ENCODE measurements at regions of chr12 and their contacts with region 1.

Region 1: GRCh38 chr12:56117778-56118687 is at the start of gene ZC3H10:
- DNase-seq: peak; percentile 94
- ATAC-seq: peak; percentile 81
- H3K4me3 Mint-ChIP-seq: peak within 1 kb of the TSS; percentile 98
- H3K27ac Mint-ChIP-seq: peak within 1 kb of the TSS; percentile 99
- H3K4me1 Mint-ChIP-seq: peaks cover 24% of the 10 kb centered on the region
- H3K27me3 Mint-ChIP-seq: no peaks in the 10 kb centered on the region
- total RNA-seq, gene ZC3H10: 10.6 to 12.0 TPM

Region 2: GRCh38 chr12:55996715-55997534 is 121.1 kb before region 1 on chr12 and contains the start of gene SUOX:
- POLR2A ChIA-PET with region 1: interaction called, 10 read pairs
- DNase-seq: peak; percentile 55
- ATAC-seq: peak; percentile 87
- H3K4me3 Mint-ChIP-seq: peak within 1 kb of the TSS; percentile 86
- H3K27ac Mint-ChIP-seq: peak within 1 kb of the TSS; percentile 56
- H3K4me1 Mint-ChIP-seq: peaks cover 21% of the 10 kb centered on the region
- H3K27me3 Mint-ChIP-seq: peaks cover 2% of the 10 kb centered on the region
- total RNA-seq, gene SUOX: 8.1 to 11.4 TPM

Region 3: GRCh38 chr12:56014206-56014605 is 103.8 kb before region 1 on chr12:
- POLR2A ChIA-PET with region 1: no interaction called
- DNase-seq: no peak
- ATAC-seq: no peak
- H3K4me3 Mint-ChIP-seq: no peak overlapping the region
- H3K27ac Mint-ChIP-seq: no peak overlapping the region
- H3K4me1 Mint-ChIP-seq: peaks cover 15% of the 10 kb centered on the region
- H3K27me3 Mint-ChIP-seq: no peaks in the 10 kb centered on the region

Region 4: DNA sequence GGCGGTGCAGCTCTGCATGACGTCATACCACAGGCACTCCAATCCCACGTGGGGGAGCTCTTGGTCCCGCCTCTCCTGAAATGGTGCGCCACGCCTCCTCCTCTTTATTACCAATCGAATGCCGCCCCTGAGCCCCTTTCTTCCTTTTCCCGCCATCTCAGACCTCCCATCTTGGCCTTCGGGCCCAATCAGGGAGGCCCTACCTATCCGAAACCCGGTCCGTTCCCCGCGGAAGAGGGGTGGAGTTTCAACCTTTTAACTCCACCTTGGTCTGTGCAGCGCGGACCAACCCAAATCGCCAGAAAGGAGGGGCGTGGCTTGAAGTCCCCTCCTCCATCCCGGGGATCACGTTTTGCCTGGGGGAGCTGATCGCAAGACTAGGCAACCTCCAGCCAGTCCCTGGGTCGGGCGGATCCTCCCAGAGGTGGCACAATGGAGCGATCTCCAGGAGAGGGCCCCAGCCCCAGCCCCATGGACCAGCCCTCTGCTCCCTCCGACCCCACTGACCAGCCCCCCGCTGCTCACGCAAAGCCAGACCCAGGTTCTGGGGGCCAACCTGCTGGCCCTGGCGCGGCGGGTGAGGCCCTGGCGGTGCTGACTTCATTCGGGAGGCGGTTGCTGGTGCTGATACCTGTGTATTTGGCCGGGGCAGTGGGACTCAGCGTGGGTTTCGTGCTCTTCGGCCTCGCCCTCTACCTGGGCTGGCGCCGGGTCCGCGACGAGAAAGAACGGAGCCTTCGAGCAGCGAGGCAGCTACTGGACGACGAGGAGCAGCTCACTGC is 10.0 kb after region 1 on chr12 and contains the start of gene ESYT1:
- POLR2A ChIA-PET with region 1: interaction called, 57 read pairs
- DNase-seq: peak; percentile 91
- ATAC-seq: peak; percentile 89
- H3K4me3 Mint-ChIP-seq: peak within 1 kb of the TSS; percentile 100
- H3K27ac Mint-ChIP-seq: peak within 1 kb of the TSS; percentile 97
- H3K4me1 Mint-ChIP-seq: peaks cover 55% of the 10 kb centered on the region
- H3K27me3 Mint-ChIP-seq: no peaks in the 10 kb centered on the region
- total RNA-seq, gene ESYT1: 251 TPM

Region 5: GRCh38 chr12:56189176-56189917 is 71.3 kb after region 1 on chr12 and contains the start of gene SMARCC2:
- POLR2A ChIA-PET with region 1: interaction called, 66 read pairs
- DNase-seq: peak; percentile 94
- ATAC-seq: peak; percentile 87
- H3K4me3 Mint-ChIP-seq: peak within 1 kb of the TSS; percentile 99
- H3K27ac Mint-ChIP-seq: peak within 1 kb of the TSS; percentile 98
- H3K4me1 Mint-ChIP-seq: peaks cover 47% of the 10 kb centered on the region
- H3K27me3 Mint-ChIP-seq: peaks cover 2% of the 10 kb centered on the region
- total RNA-seq, gene SMARCC2: 162 to 174 TPM

Measured in activated naive CD8-positive, alpha-beta T cell treated with anti-CD3 and anti-CD28 coated beads, Interleukin-2, amount 10 ng/mL, durations not matched to agents 7 days and 5 days (primary cell).